ENCODE measurements at regions of chr2 and their contacts with region 1.

Region 1: GRCh38 chr2:64214281-64215115 is 70.3 kb upstream of the PELI1 start:
- DNase-seq: peak; percentile 95
- H3K4me3 ChIP-seq: no peak overlapping the region
- H3K27ac ChIP-seq: peak overlapping the region; percentile 67
- H3K4me1 ChIP-seq: peaks cover 45% of the 10 kb centered on the region
- H3K27me3 ChIP-seq: no peaks in the 10 kb centered on the region
- CTCF ChIP-seq: no peak

Region 2: GRCh38 chr2:63875131-63875527 is 339.4 kb before region 1 on chr2:
- CTCF ChIA-PET with region 1: interaction called, 10 read pairs
- dilution Hi-C with region 1: no loop called
- in situ Hi-C with region 1: no loop called
- intact Hi-C with region 1: no loop called
- DNase-seq: peak; percentile 84
- H3K4me3 ChIP-seq: no peak overlapping the region
- H3K27ac ChIP-seq: peak overlapping the region; percentile 91
- H3K4me1 ChIP-seq: peaks cover 44% of the 10 kb centered on the region
- H3K27me3 ChIP-seq: no peaks in the 10 kb centered on the region
- CTCF ChIP-seq: no peak

Region 3: DNA sequence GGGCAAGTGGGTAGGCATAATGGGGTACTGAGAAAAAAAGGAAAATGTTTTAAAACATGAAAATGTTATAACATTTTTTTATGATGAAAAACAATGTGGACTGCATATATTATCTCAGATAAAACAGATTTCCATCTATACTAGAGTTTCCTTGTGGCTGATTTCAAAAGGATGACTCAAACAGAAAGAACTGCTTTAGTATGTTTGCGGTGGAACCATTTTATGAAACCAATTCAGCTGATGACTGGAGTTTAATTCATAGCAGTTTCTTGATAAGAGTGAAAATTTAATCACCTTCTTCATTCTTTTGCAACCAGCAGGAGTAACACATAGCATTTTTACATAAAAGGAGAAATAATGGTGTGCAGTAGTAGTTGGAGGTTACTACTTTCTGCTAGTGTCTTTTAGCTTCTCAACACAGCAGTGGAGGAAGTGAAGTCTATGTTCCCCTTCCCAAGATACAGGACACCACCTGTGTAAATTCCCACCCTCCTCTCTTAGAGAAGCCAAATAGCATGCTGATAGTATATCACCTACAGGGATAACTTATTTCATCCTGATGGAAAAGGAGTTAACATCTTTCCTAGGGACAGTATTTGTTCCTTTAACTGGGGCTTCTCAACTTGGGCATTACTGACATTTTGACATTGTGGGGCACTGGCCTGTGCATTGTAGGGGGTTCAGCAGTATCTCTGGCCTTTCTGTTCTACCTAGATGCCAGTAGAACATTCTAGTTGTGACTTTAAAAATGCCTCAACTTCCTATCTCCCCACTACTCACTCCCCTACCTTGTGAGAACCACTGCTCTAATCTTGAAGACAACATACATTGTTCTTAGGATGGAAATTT is 100.2 kb before region 1 on chr2:
- CTCF ChIA-PET with region 1: no interaction called
- dilution Hi-C with region 1: no loop called
- in situ Hi-C with region 1: no loop called
- intact Hi-C with region 1: loop called (anchors 5 kb)
- DNase-seq: peak; percentile 86
- H3K4me3 ChIP-seq: peak overlapping the region in 1 of 3 experiments; percentile 20
- H3K27ac ChIP-seq: peak overlapping the region; percentile 62
- H3K4me1 ChIP-seq: peaks cover 25% of the 10 kb centered on the region
- H3K27me3 ChIP-seq: no peaks in the 10 kb centered on the region
- CTCF ChIP-seq: no peak

Region 4: GRCh38 chr2:64165706-64166105 is 48.8 kb before region 1 on chr2:
- CTCF ChIA-PET with region 1: interaction called, 4 read pairs
- dilution Hi-C with region 1: no loop called
- in situ Hi-C with region 1: no loop called
- intact Hi-C with region 1: loop called (anchors 1 kb)
- DNase-seq: peak; percentile 78
- H3K4me3 ChIP-seq: no peak overlapping the region
- H3K27ac ChIP-seq: no peak overlapping the region
- H3K4me1 ChIP-seq: peaks cover 16% of the 10 kb centered on the region
- H3K27me3 ChIP-seq: no peaks in the 10 kb centered on the region
- CTCF ChIP-seq: no peak

Region 5: GRCh38 chr2:64311948-64312621 is 97.6 kb after region 1 on chr2:
- CTCF ChIA-PET with region 1: interaction called, 7 read pairs
- dilution Hi-C with region 1: no loop called
- in situ Hi-C with region 1: no loop called
- intact Hi-C with region 1: loop called (anchors 5 kb)
- DNase-seq: peak; percentile 98
- H3K4me3 ChIP-seq: no peak overlapping the region
- H3K27ac ChIP-seq: peak overlapping the region; percentile 99
- H3K4me1 ChIP-seq: peaks cover 26% of the 10 kb centered on the region
- H3K27me3 ChIP-seq: no peaks in the 10 kb centered on the region
- CTCF ChIP-seq: peak; percentile 48 to 76

Region 6: DNA sequence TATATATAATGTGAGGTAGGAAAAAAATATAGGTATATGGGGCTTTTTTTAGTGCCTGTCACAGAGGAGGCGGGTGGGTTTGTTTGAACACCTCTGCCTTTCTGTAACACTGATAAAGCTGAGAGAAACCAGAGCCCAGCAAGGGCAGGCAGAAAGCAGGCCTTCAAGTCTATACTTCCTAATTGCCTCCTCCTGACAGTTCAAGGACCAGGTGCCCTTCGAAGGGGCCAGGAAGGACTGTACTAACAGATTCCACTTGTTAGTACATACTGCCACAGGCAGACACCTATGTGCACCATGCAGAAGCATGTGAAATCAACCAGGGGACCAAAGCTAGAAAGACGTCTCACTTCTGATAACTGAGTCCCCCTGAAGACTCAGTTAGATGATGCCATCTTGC is 788.5 kb after region 1 on chr2:
- CTCF ChIA-PET with region 1: no interaction called
- dilution Hi-C with region 1: no loop called
- in situ Hi-C with region 1: no loop called
- intact Hi-C with region 1: no loop called
- DNase-seq: no peak
- H3K4me3 ChIP-seq: no peak overlapping the region
- H3K27ac ChIP-seq: no peak overlapping the region
- H3K4me1 ChIP-seq: no peaks in the 10 kb centered on the region
- H3K27me3 ChIP-seq: no peaks in the 10 kb centered on the region
- CTCF ChIP-seq: no peak